CD4-positive, alpha-beta memory T cell (primary cell): ENCODE measurements at regions of chr15 and their contacts with region 1.

Region 1: GRCh38 chr15:84716036-84716799 is at the start of gene SEC11A:
- DNase-seq: peak; percentile 89 to 95 (median 92)
- H3K4me3 ChIP-seq: peak within 1 kb of the TSS; percentile 91 to 97
- H3K4me3 Mint-ChIP-seq: peak within 1 kb of the TSS; percentile 94 to 100 (median 96)
- H3K27ac ChIP-seq: peak within 1 kb of the TSS; percentile 85
- H3K27ac Mint-ChIP-seq: peak within 1 kb of the TSS; percentile 88 to 99 (median 97)
- H3K4me1 ChIP-seq: peaks cover 55% of the 10 kb centered on the region
- H3K4me1 Mint-ChIP-seq: peaks cover 33 to 66% (median 45%) of the 10 kb centered on the region in 4 donors
- H3K27me3 ChIP-seq: no peaks in the 10 kb centered on the region
- H3K27me3 Mint-ChIP-seq: no peaks in the 10 kb centered on the region
- total RNA-seq, gene SEC11A: 85.0 to 86.8 TPM

Region 2: GRCh38 chr15:84658080-84658787 is 58.0 kb before region 1 on chr15 and contains the start of gene NMB:
- CTCF ChIA-PET with region 1: interaction called, 19 read pairs
- POLR2A ChIA-PET with region 1: interaction called, 144 read pairs
- intact Hi-C with region 1: loop called (anchors 1 kb)
- DNase-seq: peak; percentile 87 to 90 (median 88)
- H3K4me3 ChIP-seq: peak within 1 kb of the TSS; percentile 39 to 44
- H3K4me3 Mint-ChIP-seq: peak within 1 kb of the TSS; percentile 77 to 87 (median 81)
- H3K27ac ChIP-seq: peak within 1 kb of the TSS; percentile 58
- H3K27ac Mint-ChIP-seq: peak within 1 kb of the TSS; percentile 89 to 98 (median 93)
- H3K4me1 ChIP-seq: peaks cover 34% of the 10 kb centered on the region
- H3K4me1 Mint-ChIP-seq: peaks cover 14 to 52% (median 35%) of the 10 kb centered on the region in 4 donors
- H3K27me3 ChIP-seq: no peaks in the 10 kb centered on the region
- H3K27me3 Mint-ChIP-seq: no peaks in the 10 kb centered on the region
- total RNA-seq, gene NMB: 2.4 to 2.5 TPM

Region 3: DNA sequence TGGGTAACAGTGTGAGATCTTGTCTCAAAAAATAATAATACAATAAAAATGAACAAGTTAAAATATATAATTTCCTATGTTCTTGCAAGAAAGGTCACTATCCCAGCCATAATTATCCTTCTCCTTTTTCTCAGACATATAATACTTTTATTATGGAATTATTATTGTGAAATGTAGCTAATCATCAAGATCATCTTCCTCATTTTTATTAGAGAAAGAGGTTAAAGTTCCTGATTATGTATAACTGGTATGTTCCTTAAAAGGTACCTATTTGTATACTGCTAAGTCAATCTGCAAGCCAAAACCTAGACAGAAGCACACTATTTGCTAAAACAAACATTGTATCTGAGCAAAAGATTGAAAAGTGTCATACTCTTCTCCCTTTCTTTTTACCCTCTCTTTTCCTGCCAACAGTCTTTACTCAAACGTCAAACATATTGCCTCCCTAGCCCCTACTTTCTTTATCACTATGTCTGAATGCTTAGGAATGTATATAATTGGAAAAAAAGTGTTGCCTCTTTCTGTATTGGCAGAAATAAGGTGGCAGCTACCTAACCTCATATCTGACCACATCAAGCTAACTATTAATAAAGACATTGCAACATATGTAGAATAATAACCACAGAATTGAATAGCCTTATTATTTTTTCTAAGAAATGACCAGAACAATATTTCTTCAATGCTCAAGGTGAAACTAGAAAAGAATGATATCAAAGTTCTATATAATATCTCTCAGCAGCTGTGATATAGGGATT is 18.8 kb before region 1 on chr15:
- CTCF ChIA-PET with region 1: interaction called, 6 read pairs
- POLR2A ChIA-PET with region 1: interaction called, 30 read pairs
- intact Hi-C with region 1: no loop called
- DNase-seq: no peak
- H3K4me3 ChIP-seq: no peak overlapping the region
- H3K4me3 Mint-ChIP-seq: peak overlapping the region in 4 of 8 donors; percentile 1 to 41 (median 11)
- H3K27ac ChIP-seq: no peak overlapping the region
- H3K27ac Mint-ChIP-seq: peak overlapping the region in 4 of 7 donors; percentile 1 to 78 (median 34)
- H3K4me1 ChIP-seq: peaks cover 55% of the 10 kb centered on the region
- H3K4me1 Mint-ChIP-seq: peaks cover 32 to 63% (median 45%) of the 10 kb centered on the region in 4 donors
- H3K27me3 ChIP-seq: no peaks in the 10 kb centered on the region
- H3K27me3 Mint-ChIP-seq: no peaks in the 10 kb centered on the region

Region 4: DNA sequence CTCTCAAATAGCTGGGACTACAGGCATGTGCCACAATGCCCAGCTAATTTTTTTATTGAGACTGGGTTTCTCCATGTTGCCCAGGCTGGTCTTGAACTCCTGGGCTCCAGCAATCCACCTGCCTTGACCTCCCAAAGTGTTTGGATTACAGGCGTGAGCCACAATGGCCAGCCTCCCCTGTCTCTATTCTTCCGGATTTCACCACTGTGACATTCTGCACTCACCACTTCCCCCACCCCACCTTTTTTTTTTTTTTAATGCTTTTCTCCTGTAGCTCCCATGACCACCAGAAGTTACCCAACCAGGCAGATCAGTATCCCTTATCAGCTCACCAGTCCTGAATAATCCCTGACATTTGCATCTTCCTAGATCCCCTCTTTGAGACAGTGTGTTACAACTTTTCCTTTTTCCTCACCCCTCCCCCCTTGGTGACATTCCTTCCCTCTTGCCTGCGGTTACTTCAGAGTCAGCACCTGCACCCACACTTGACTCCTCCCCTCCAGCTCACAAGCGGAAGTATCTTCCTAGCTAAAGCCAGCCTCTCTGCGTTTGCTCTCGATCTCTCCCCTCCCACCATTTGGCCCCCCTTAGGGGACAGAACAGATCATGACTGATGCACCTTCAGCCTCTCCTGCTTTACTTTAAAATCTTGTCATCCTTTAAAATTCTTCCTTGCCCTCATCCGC is 18.7 kb after region 1 on chr15:
- CTCF ChIA-PET with region 1: interaction called, 57 read pairs
- POLR2A ChIA-PET with region 1: interaction called, 598 read pairs
- intact Hi-C with region 1: loop called (anchors 1 kb)
- DNase-seq: peak; percentile 72 to 88 (median 77)
- H3K4me3 ChIP-seq: peak overlapping the region; percentile 25 to 46
- H3K4me3 Mint-ChIP-seq: peak overlapping the region; percentile 77 to 90 (median 81)
- H3K27ac ChIP-seq: peak overlapping the region; percentile 41
- H3K27ac Mint-ChIP-seq: peak overlapping the region; percentile 84 to 95 (median 93)
- H3K4me1 ChIP-seq: peaks cover 53% of the 10 kb centered on the region
- H3K4me1 Mint-ChIP-seq: peaks cover 29 to 50% (median 38%) of the 10 kb centered on the region in 4 donors
- H3K27me3 ChIP-seq: no peaks in the 10 kb centered on the region
- H3K27me3 Mint-ChIP-seq: no peaks in the 10 kb centered on the region

Region 5: DNA sequence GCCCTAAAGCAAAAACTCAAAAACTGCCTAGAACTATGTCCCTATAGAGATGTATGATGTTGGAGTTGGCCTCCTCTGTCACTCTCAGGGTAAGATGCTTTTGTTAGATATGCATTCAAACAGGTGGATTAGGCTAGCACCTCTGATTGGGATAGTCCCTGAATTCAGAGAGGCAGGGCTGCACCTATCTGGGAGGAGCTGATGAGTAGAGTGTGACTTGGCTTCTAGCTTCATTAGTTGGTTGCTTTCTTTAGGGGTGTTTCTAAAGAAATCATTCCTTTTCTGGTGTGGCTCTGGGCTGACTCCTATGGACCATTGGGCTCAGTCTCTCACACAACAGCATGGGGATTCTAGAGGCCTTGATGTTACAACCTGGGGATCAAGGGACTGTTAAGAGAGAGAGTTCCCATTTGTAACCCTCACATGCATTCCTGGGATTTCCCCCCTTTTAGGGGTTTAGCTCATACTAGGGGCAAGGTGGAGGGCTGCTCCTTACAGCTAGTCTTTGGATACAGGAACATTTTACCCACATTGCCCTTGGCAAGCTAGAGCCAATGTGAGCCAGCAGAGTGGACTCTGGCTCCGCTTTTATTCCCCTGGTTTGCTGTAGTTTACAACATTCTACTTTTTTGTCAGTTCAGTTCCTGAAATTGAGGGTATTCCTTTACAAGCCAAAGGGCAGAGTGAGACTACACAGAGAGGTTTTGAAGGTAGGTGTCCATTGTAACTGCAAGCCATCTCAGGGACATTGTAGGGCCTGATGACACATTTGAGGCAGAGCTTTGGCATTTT is 39.7 kb after region 1 on chr15:
- CTCF ChIA-PET with region 1: interaction called, 4 read pairs
- POLR2A ChIA-PET with region 1: interaction called, 522 read pairs
- intact Hi-C with region 1: no loop called
- DNase-seq: no peak
- H3K4me3 ChIP-seq: no peak overlapping the region
- H3K4me3 Mint-ChIP-seq: peak overlapping the region in 3 of 8 donors; percentile 6 to 46 (median 7)
- H3K27ac ChIP-seq: no peak overlapping the region
- H3K27ac Mint-ChIP-seq: peak overlapping the region in 5 of 7 donors; percentile 15 to 73 (median 66)
- H3K4me1 ChIP-seq: peaks cover 75% of the 10 kb centered on the region
- H3K4me1 Mint-ChIP-seq: peaks cover 37 to 53% (median 45%) of the 10 kb centered on the region in 4 donors
- H3K27me3 ChIP-seq: no peaks in the 10 kb centered on the region
- H3K27me3 Mint-ChIP-seq: no peaks in the 10 kb centered on the region

Region 6: DNA sequence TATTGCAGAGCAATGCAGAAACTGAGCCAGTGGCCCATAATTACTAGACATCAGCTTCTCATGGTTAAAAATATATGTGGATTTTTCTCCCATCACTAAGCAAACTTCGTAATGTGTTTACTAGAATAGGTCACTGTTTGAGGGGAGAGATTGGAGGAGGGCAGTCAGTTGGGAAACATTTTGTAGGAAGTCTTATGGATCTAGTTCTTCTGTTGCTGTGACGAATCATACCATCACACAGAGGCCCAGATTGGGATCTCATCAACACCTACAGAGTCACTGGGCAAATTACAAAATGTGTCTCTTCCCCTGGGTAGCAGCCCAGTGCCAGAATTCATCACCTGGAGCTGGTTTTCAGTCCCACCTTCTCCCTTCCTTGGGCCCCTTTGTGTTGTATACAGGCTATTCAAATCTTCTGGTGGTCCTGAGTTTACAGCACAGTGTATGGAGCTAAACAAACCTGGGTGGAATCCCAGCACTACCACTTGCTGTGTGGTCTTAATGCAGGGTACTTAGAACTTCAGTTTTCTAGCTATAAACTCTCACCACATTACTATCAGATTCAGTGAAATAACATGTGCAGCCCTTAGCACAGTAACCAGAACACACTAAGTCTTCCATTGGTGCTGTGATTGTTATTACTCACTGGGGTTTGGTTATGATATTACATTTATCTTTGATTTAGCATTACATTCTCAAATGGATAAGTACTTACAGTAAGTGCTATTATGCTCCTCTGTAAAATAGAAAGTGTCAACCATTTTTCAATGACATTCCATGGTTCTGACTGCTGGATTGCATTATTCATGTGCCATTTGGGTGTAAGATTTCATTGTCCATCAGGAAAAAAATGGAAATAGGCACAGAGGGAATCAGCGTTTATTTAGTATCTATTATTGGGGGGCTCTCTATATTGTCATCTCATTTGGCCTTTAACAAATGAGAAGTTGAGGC is 347.2 kb after region 1 on chr15:
- CTCF ChIA-PET with region 1: no interaction called
- POLR2A ChIA-PET with region 1: no interaction called
- intact Hi-C with region 1: no loop called
- DNase-seq: no peak
- H3K4me3 ChIP-seq: no peak overlapping the region
- H3K4me3 Mint-ChIP-seq: no peak overlapping the region
- H3K27ac ChIP-seq: no peak overlapping the region
- H3K27ac Mint-ChIP-seq: peak overlapping the region in 1 of 7 donors; percentile 17
- H3K4me1 ChIP-seq: no peaks in the 10 kb centered on the region
- H3K4me1 Mint-ChIP-seq: peaks cover 9 to 36% (median 22%) of the 10 kb centered on the region in 4 donors
- H3K27me3 ChIP-seq: no peaks in the 10 kb centered on the region
- H3K27me3 Mint-ChIP-seq: no peaks in the 10 kb centered on the region